ENCODE measurements at regions of chr3 and their contacts with region 1.

Region 1: GRCh38 chr3:151282921-151283320 is 4.6 kb upstream of the P2RY14 start:
- DNase-seq: peak in 4 of 5 donors; percentile 64 to 71 (median 68)
- H3K4me3 ChIP-seq: no peak overlapping the region
- H3K4me3 Mint-ChIP-seq: no peak overlapping the region
- H3K27ac ChIP-seq: no peak overlapping the region
- H3K27ac Mint-ChIP-seq: peak overlapping the region in 6 of 7 donors; percentile 25 to 90 (median 77)
- H3K4me1 ChIP-seq: peaks cover 27% of the 10 kb centered on the region
- H3K4me1 Mint-ChIP-seq: peaks cover 20 to 36% (median 25%) of the 10 kb centered on the region in 4 donors
- H3K27me3 ChIP-seq: no peaks in the 10 kb centered on the region
- H3K27me3 Mint-ChIP-seq: no peaks in the 10 kb centered on the region

Region 2: DNA sequence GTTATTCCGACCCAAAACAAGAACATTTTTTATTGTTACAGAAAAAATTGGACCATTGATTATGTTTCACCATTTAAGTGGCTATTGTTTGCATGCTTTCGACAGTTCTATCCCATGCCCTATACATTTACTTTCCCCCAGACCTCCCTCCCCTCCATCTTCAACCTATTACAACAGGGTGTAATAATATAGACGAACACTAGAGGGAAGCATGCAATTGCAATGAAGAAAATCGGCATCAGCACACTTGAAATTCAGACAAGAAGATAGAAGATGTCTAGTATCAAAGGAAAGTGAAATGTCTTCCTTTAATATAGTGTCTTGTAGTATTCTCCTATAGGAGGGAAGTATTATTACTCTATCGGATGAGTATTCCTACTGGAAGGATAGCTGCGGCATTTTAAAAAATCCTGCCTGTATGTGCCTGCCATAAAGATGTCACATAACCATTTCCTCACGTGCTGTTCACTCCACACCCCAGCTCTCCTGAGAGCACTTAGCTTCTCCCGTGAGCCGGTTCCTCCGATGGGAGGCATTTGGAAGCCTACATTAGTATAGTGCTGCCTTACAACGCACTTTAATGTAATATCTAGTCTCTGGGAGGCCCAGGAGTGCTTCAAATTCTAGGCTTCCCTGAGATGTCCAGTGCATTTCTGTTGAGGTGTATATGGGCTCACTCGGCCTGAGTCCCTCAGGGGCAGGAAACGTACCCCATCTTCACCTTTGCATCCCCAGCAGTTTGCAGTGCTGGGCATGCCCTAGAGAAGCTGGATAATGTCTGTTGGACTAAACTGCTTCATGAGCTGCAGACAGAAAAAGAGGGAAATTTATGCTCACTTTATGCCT is 561.4 kb before region 1 on chr3:
- CTCF ChIA-PET with region 1: no interaction called
- POLR2A ChIA-PET with region 1: no interaction called
- intact Hi-C with region 1: loop called (anchors 2 kb)
- DNase-seq: peak in 4 of 5 donors; percentile 67 to 75 (median 68)
- H3K4me3 ChIP-seq: no peak overlapping the region
- H3K4me3 Mint-ChIP-seq: peak overlapping the region in 1 of 8 donors; percentile 48
- H3K27ac ChIP-seq: no peak overlapping the region
- H3K27ac Mint-ChIP-seq: peak overlapping the region in 2 of 7 donors; percentile 11 to 53
- H3K4me1 ChIP-seq: peaks cover 12% of the 10 kb centered on the region
- H3K4me1 Mint-ChIP-seq: peaks cover 6 to 11% (median 8%) of the 10 kb centered on the region in 4 donors
- H3K27me3 ChIP-seq: no peaks in the 10 kb centered on the region
- H3K27me3 Mint-ChIP-seq: no peaks in the 10 kb centered on the region

Region 3: GRCh38 chr3:150925751-150926201 is 357.1 kb before region 1 on chr3:
- CTCF ChIA-PET with region 1: no interaction called
- POLR2A ChIA-PET with region 1: no interaction called
- intact Hi-C with region 1: loop called (anchors 5 kb)
- DNase-seq: peak in 4 of 5 donors; percentile 28 to 37 (median 31)
- H3K4me3 ChIP-seq: no peak overlapping the region
- H3K4me3 Mint-ChIP-seq: peak overlapping the region in 7 of 8 donors; percentile 48 to 68 (median 59)
- H3K27ac ChIP-seq: no peak overlapping the region
- H3K27ac Mint-ChIP-seq: no peak overlapping the region
- H3K4me1 ChIP-seq: peaks cover 3% of the 10 kb centered on the region
- H3K4me1 Mint-ChIP-seq: peaks cover 3 to 8% (median 6%) of the 10 kb centered on the region in 4 donors
- H3K27me3 ChIP-seq: peaks cover 8% of the 10 kb centered on the region
- H3K27me3 Mint-ChIP-seq: peaks cover 8 to 13% of the 10 kb centered on the region in 2 donors

Region 4: GRCh38 chr3:151203051-151203420 is 79.9 kb before region 1 on chr3 and contains the start of gene GPR171:
- CTCF ChIA-PET with region 1: interaction called, 12 read pairs
- POLR2A ChIA-PET with region 1: interaction called, 10 read pairs
- intact Hi-C with region 1: no loop called
- DNase-seq: peak; percentile 80 to 87 (median 82)
- H3K4me3 ChIP-seq: peak within 1 kb of the TSS; percentile 59 to 63
- H3K4me3 Mint-ChIP-seq: peak within 1 kb of the TSS; percentile 73 to 89 (median 86)
- H3K27ac ChIP-seq: peak within 1 kb of the TSS; percentile 75
- H3K27ac Mint-ChIP-seq: peak within 1 kb of the TSS; percentile 87 to 98 (median 97)
- H3K4me1 ChIP-seq: peaks cover 83% of the 10 kb centered on the region
- H3K4me1 Mint-ChIP-seq: peaks cover 45 to 94% (median 59%) of the 10 kb centered on the region in 4 donors
- H3K27me3 ChIP-seq: no peaks in the 10 kb centered on the region
- H3K27me3 Mint-ChIP-seq: no peaks in the 10 kb centered on the region
- total RNA-seq, gene GPR171: 116 to 129 TPM

Region 5: DNA sequence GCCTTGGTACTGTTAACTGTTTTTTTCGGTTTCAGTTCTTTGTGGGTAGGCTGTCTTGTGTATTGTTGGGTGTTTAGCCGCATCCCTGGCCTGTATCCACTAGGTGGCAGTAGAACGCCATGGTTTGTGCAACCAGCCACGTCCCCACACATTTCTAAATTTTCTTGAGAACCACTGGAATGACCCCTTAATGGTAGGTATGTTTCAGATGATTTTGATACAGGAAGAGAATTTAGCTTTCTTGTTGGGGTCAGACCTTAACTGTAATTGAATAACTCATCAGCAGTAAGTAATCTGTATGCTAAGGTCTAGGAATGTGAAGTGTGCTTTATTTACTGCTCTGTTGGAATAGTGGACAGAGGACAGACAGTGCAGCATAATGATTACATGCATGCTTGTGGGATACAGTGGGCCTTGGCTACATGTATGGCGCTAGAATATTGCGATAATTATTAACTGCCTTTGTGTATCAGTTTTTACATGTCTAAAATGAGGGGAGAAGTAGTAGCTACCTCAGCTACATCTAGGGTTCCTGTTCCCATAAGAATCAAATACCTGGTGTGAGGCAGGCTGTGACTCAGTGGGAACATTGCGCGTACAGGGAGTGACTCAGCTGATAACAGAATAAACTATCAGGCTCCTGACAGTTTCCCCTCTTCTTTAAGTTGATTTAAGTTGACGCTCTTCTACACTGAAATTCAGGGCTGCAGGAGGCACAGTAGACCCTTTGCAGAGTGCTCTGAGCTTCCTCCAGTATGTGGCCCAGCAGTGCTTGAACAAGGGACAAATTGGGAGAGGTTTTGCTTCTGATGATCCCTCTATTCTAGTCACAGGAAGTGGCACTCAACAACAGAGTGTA is 54.9 kb before region 1 on chr3:
- CTCF ChIA-PET with region 1: interaction called, 200 read pairs
- POLR2A ChIA-PET with region 1: interaction called, 10 read pairs
- intact Hi-C with region 1: loop called (anchors 1 kb)
- DNase-seq: peak; percentile 74 to 78 (median 76)
- H3K4me3 ChIP-seq: no peak overlapping the region
- H3K4me3 Mint-ChIP-seq: peak overlapping the region in 3 of 8 donors; percentile 6 to 63 (median 41)
- H3K27ac ChIP-seq: no peak overlapping the region
- H3K27ac Mint-ChIP-seq: peak overlapping the region in 6 of 7 donors; percentile 2 to 70 (median 49)
- H3K4me1 ChIP-seq: peaks cover 23% of the 10 kb centered on the region
- H3K4me1 Mint-ChIP-seq: peaks cover 26 to 51% (median 35%) of the 10 kb centered on the region in 4 donors
- H3K27me3 ChIP-seq: no peaks in the 10 kb centered on the region
- H3K27me3 Mint-ChIP-seq: no peaks in the 10 kb centered on the region

Region 6: DNA sequence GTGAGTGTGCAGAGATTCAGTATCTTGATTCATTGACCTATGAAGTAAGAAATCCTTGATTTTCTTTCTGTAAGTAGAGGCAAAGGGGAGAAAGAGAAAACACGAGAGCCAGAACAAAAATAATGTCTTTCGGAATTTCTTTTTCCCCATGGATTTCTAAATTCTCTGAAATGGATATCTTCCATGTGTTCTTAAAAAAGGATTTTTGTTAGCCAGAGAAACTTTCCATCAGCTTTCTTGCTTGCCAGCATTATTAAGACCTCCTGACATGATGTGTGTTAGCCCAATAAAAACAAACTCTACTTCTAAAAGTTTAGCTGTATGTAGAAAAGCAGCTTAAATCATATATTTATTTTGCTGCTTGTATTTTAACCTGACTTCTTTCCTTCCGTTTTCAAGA is 328.5 kb after region 1 on chr3:
- CTCF ChIA-PET with region 1: no interaction called
- POLR2A ChIA-PET with region 1: no interaction called
- intact Hi-C with region 1: no loop called
- DNase-seq: no peak
- H3K4me3 ChIP-seq: no peak overlapping the region
- H3K4me3 Mint-ChIP-seq: no peak overlapping the region
- H3K27ac ChIP-seq: no peak overlapping the region
- H3K27ac Mint-ChIP-seq: no peak overlapping the region
- H3K4me1 ChIP-seq: no peaks in the 10 kb centered on the region
- H3K4me1 Mint-ChIP-seq: no peaks in the 10 kb centered on the region
- H3K27me3 ChIP-seq: no peaks in the 10 kb centered on the region
- H3K27me3 Mint-ChIP-seq: peaks cover 0 to 5% of the 10 kb centered on the region in 2 donors

Region 7: DNA sequence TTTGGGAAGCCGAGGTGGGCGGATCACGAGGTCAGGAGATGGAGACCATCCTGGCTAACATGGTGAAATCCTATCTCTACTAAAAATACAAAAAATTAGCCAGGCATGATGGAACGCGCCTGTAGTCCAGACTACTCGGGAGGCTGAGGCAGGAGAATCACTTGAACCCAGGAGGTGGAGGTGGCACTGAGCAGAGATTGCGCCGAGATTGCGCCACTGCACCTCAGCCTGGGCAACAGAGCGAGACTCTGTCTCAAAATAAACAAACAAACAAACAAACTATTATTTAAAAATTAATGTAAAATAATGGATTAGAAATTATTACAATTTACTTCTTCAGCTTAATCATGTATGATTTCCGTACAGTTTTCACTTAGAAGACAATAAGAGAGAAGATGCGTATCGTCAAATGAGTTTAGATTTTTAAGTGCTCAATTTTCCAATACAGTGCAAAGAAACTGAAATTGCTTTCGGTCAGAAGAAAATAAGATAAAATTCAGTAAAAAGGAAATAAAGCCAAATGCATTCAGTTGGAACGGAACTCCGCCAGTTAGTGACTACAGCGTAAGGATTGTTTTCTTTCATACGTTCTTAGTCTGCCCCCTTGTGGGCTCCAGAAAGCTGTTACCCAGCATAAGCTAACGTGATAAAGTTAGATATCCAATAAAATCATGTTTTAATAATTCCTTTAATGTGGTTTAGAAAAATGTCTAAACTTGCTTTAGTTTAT is 555.8 kb after region 1 on chr3:
- CTCF ChIA-PET with region 1: no interaction called
- POLR2A ChIA-PET with region 1: no interaction called
- intact Hi-C with region 1: loop called (anchors 2 kb)
- DNase-seq: peak in 4 of 5 donors; percentile 19 to 32 (median 30)
- H3K4me3 ChIP-seq: no peak overlapping the region
- H3K4me3 Mint-ChIP-seq: no peak overlapping the region
- H3K27ac ChIP-seq: no peak overlapping the region
- H3K27ac Mint-ChIP-seq: no peak overlapping the region
- H3K4me1 ChIP-seq: no peaks in the 10 kb centered on the region
- H3K4me1 Mint-ChIP-seq: peaks cover 0 to 2% (median under 1%) of the 10 kb centered on the region in 4 donors
- H3K27me3 ChIP-seq: no peaks in the 10 kb centered on the region
- H3K27me3 Mint-ChIP-seq: peaks cover 5 to 7% of the 10 kb centered on the region in 2 donors

Measured in CD4-positive, alpha-beta memory T cell (primary cell).